ENCODE measurements at regions of chr10 and their contacts with region 1.

Region 1: GRCh38 chr10:22573820-22574569 is 140.4 kb downstream of the PIP4K2A start:
- DNase-seq: peak in 1 of 2 donors; percentile 20
- ATAC-seq: peak in 2 of 8 donors; percentile 42 to 45
- H3K4me3 ChIP-seq: no peak overlapping the region
- H3K27ac ChIP-seq: peak overlapping the region in 1 of 10 donors; percentile 39
- H3K4me1 ChIP-seq: peaks cover 0 to 15% (median 0%) of the 10 kb centered on the region in 9 donors
- H3K27me3 ChIP-seq: no peaks in the 10 kb centered on the region
- CTCF ChIP-seq: peak in 8 of 9 donors; percentile 28 to 75 (median 50)

Region 2: GRCh38 chr10:21989453-21990154 is 584.4 kb before region 1 on chr10:
- intact Hi-C with region 1: loop called in 1 of 10 experiments (anchors 10 kb)
- DNase-seq: peak; percentile 19 to 21
- ATAC-seq: peak; percentile 79 to 96 (median 90)
- H3K4me3 ChIP-seq: no peak overlapping the region
- H3K27ac ChIP-seq: no peak overlapping the region
- H3K4me1 ChIP-seq: peaks cover 0 to 13% (median 6%) of the 10 kb centered on the region in 9 donors
- H3K27me3 ChIP-seq: no peaks in the 10 kb centered on the region
- CTCF ChIP-seq: peak; percentile 10 to 66 (median 46)

Measured in heart right ventricle (tissue), 16 donors.